ENCODE measurements at regions of chr20 and their contacts with region 1.

Region 1: GRCh38 chr20:31547017-31547675 is 32.9 kb downstream of the HM13 start:
- H3K4me3 Mint-ChIP-seq: peak overlapping the region; percentile 79
- H3K27ac Mint-ChIP-seq: peak overlapping the region; percentile 95
- H3K4me1 Mint-ChIP-seq: peaks cover 20% of the 10 kb centered on the region
- H3K27me3 Mint-ChIP-seq: no peaks in the 10 kb centered on the region

Region 2: DNA sequence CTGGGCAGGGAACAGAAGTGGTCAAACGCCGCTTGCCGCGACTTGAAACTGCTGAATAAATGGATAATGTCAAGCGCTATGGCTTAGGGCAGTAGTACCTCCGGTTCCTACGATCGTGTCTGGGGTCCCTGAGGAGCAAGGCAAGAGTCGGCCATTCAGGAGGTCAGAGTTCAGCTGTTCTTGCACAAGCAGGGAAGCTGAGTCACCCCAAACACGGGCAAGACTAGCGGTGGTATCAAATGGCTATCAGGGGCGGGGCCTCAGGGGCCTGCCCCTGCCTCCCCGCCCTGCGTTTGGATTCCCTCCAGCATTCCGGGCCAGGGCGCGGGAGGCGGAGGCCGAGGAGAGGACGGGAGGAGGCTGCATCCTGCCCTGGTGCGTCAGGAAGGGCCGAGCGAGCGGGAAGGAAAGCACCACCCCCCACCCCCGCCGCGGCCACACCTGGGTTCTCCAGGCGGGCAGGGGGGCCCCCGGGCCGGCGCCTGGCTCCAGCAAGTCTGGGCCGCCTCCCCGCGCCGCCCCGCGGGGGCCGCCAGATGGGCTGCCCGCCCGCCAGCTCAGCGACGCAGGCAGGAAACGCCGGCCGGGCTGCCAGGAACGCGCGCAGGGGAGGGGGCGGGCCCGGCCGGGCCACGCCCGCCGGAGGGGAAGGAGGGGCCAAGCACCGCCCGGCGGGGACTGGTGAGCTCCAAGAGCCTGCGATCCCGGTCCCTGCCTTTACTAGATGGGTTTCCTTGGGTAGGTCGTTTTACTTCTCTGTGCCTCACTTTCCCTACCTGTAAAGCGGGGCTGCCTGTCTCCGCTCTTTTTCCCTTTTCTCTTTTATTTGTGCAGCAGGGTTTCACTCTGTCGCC is 25.8 kb after region 1 on chr20:
- intact Hi-C with region 1: loop called (anchors 1 kb)
- H3K4me3 Mint-ChIP-seq: peak overlapping the region; percentile 82
- H3K27ac Mint-ChIP-seq: peak overlapping the region; percentile 87
- H3K4me1 Mint-ChIP-seq: peaks cover 31% of the 10 kb centered on the region
- H3K27me3 Mint-ChIP-seq: no peaks in the 10 kb centered on the region

Region 3: DNA sequence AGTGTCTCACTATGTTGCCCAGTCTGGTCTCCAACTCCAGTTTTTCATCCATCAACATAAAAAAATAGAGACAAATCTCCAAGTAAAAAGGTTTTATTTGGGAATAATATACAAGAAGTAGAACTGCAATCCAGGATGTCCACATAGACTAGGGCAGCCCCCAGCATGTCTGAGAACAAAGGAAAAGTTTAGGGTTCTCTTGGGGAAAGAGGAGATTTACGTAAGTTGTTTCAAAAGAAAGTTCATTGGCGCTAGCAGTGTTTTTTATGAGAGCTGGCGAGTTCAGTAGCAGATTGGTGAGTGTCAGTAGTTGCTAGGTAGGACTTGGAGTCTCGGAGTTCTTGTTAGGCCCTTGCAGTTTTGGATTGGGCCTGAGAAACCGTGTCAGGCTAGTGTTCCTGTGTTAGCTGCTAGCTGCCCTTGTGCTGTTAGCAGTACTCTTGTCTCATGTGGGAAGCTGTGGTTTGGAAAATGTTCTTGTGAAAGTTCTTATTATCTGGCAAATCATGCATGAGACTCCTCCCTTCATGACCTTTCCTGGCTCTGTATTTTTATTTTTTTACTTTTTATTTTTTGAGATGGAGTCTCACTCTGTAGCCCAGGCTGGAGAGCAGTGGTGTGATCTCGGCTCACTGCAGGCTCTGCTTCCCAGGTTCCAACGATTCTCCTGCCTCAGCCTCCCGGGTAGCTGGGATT is 348.0 kb after region 1 on chr20:
- intact Hi-C with region 1: no loop called
- H3K4me3 Mint-ChIP-seq: no peak overlapping the region
- H3K27ac Mint-ChIP-seq: peak overlapping the region; percentile 85
- H3K4me1 Mint-ChIP-seq: peaks cover 4% of the 10 kb centered on the region
- H3K27me3 Mint-ChIP-seq: peaks cover 4% of the 10 kb centered on the region

Measured in dendritic cell treated with granulocyte-macrophage colony-stimulating factor and Interleukin-4, amounts not matched to agents 40 ng/mL and 50 ng/mL, for 4 days (primary cell).